PC-9 (cell line): ENCODE measurements at regions of chr6 and their contacts with region 1.

Region 1: GRCh38 chr6:41976794-41977484 is 35.3 kb upstream of the CCND3 start:
- DNase-seq: peak in 1 of 2 experiments; percentile 77
- H3K4me3 ChIP-seq: no peak overlapping the region
- H3K27ac ChIP-seq: 0 out of 2 replicates have a peak overlapping the region, but pooled peaks have one; percentile 15
- H3K4me1 ChIP-seq: peaks cover 13% of the 10 kb centered on the region
- H3K27me3 ChIP-seq: no peaks in the 10 kb centered on the region
- CTCF ChIP-seq: no peak

Region 2: GRCh38 chr6:41779793-41780545 is 197.0 kb before region 1 on chr6 and contains the start of gene FRS3:
- CTCF ChIA-PET with region 1: no interaction called
- POLR2A ChIA-PET with region 1: no interaction called
- intact Hi-C with region 1: no loop called
- DNase-seq: peak; percentile 79 to 97
- H3K4me3 ChIP-seq: peak within 1 kb of the TSS; percentile 94
- H3K27ac ChIP-seq: peak within 1 kb of the TSS; percentile 43; the same call in 1 of the 2 replicates
- H3K4me1 ChIP-seq: peaks cover 34% of the 10 kb centered on the region
- H3K27me3 ChIP-seq: no peaks in the 10 kb centered on the region
- CTCF ChIP-seq: peak; percentile 88
- total RNA-seq, gene FRS3: 4.5 and 10.4 TPM in 2 replicates

Region 3: GRCh38 chr6:42914546-42914945 is 937.6 kb after region 1 on chr6:
- CTCF ChIA-PET with region 1: no interaction called
- POLR2A ChIA-PET with region 1: interaction called, 10 read pairs
- intact Hi-C with region 1: no loop called
- DNase-seq: no peak
- H3K4me3 ChIP-seq: no peak overlapping the region
- H3K27ac ChIP-seq: no peak overlapping the region
- H3K4me1 ChIP-seq: no peaks in the 10 kb centered on the region
- H3K27me3 ChIP-seq: no peaks in the 10 kb centered on the region
- CTCF ChIP-seq: no peak